PC-9 (cell line): ENCODE measurements at regions of chr11 and their contacts with region 1.

Region 1: DNA sequence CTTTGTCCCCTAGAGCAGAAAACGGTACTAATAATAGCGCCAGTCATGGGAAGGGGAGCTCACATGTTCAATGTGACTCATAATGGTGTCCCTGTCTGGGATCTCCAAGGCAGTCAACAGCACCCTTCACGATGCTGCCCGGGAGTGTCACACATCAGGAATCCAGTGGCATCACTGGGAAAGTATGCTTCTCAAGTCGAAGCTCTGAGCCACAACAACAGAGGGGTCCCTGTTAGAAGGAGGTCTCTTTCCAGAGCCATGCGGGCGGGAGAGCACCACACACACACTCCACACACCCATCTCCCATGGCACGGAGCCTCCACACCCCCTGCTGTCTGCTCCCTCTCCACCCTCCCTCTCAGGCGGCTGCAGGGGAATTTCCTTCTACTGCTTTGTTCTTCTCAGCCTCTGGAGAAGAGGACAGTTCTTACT is 119.7 kb downstream of the ETS1 start:
- DNase-seq: peak; percentile 69 to 87
- H3K4me3 ChIP-seq: no peak overlapping the region
- H3K27ac ChIP-seq: peak overlapping the region; percentile 62
- H3K4me1 ChIP-seq: peaks cover 18% of the 10 kb centered on the region
- H3K27me3 ChIP-seq: no peaks in the 10 kb centered on the region
- CTCF ChIP-seq: no peak

Region 2: GRCh38 chr11:128290106-128290840 is 177.4 kb before region 1 on chr11:
- CTCF ChIA-PET with region 1: no interaction called
- POLR2A ChIA-PET with region 1: no interaction called
- intact Hi-C with region 1: loop called (anchors 1 kb)
- DNase-seq: peak; percentile 45 to 58
- H3K4me3 ChIP-seq: no peak overlapping the region
- H3K27ac ChIP-seq: no peak overlapping the region
- H3K4me1 ChIP-seq: peaks cover 18% of the 10 kb centered on the region
- H3K27me3 ChIP-seq: no peaks in the 10 kb centered on the region
- CTCF ChIP-seq: peak; percentile 93

Region 3: DNA sequence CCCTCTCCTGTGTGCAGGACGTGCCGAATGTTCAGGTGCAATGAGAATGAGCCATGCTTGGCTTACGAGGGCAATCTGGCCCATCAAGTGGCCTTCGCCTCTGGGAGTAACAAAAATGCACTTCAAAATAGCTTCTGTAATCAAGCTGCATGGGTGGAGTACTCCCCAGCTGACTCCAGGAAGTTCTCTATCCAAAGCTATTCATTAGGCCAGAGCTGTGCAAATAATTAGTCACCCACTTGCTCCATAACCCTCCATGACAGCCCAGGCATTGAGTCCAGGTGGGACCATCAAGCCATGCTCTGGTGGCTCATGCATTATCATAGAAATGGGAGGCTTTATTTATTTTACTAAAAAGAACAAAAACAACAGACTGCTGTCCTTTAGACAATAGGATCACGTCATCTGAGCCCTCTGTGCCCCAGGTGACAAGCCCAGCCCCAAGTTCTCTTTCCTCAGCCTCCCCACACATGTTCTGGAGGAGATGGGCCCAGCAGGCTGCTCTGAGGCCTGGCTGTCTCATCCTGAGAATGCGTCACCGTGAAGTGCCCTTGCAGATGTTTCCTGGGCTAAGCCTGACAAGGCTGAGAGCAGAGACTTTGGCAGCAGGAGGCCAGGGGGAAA is 125.0 kb before region 1 on chr11:
- CTCF ChIA-PET with region 1: no interaction called
- POLR2A ChIA-PET with region 1: interaction called, 4 read pairs
- intact Hi-C with region 1: loop called (anchors 1 kb)
- DNase-seq: peak; percentile 58 to 99
- H3K4me3 ChIP-seq: no peak overlapping the region
- H3K27ac ChIP-seq: peak overlapping the region; percentile 71
- H3K4me1 ChIP-seq: peaks cover 34% of the 10 kb centered on the region
- H3K27me3 ChIP-seq: no peaks in the 10 kb centered on the region
- CTCF ChIP-seq: no peak

Region 4: DNA sequence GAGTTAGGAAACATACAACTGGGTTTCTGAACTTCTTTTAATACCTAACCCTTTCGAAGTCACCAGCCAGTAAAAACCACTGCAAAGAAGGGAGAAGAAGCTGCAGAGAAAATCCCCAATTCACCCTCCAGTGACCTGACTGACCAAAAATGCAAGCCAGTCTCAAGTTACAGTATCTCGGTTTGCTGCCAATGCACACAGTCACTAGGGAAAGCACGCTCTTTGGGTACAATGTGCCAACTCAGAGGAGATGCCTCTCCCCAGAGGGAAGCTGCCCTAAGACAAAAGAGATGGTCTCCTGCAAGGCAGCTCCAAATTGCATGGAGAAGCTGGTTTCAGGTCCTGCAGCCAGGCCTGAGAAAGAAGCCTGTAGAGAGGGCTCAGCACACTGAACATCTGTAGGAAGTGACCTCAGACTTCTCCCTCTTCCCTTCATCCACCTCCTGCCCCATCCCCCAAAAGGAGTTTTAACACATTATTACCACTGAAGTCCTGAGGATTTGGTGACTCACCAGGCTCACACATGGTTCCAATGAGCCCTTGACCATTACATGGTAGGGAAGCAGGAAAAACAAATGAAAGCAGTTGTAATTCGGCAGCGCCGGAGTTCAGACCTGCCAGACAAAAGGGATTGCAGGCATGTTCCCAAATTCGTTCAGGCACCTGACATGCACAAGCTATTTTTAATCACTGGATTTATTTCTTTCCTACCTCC is 29.6 kb after region 1 on chr11:
- CTCF ChIA-PET with region 1: no interaction called
- POLR2A ChIA-PET with region 1: no interaction called
- intact Hi-C with region 1: loop called (anchors 1 kb)
- DNase-seq: peak; percentile 80 to 97
- H3K4me3 ChIP-seq: peak overlapping the region; percentile 49; the same call in 1 of the 2 replicates
- H3K27ac ChIP-seq: peak overlapping the region; percentile 99
- H3K4me1 ChIP-seq: peaks cover 79% of the 10 kb centered on the region
- H3K27me3 ChIP-seq: no peaks in the 10 kb centered on the region
- CTCF ChIP-seq: no peak

Region 5: GRCh38 chr11:128624269-128625175 is 156.9 kb after region 1 on chr11:
- CTCF ChIA-PET with region 1: no interaction called
- POLR2A ChIA-PET with region 1: no interaction called
- intact Hi-C with region 1: loop called (anchors 1 kb)
- DNase-seq: peak; percentile 28 to 62
- H3K4me3 ChIP-seq: no peak overlapping the region
- H3K27ac ChIP-seq: peak overlapping the region; percentile 36; the same call in 1 of the 2 replicates
- H3K4me1 ChIP-seq: peaks cover 15% of the 10 kb centered on the region
- H3K27me3 ChIP-seq: no peaks in the 10 kb centered on the region
- CTCF ChIP-seq: no peak

Region 6: GRCh38 chr11:129593098-129593497 is 1125.5 kb after region 1 on chr11:
- CTCF ChIA-PET with region 1: no interaction called
- POLR2A ChIA-PET with region 1: interaction called, 10 read pairs
- intact Hi-C with region 1: no loop called
- DNase-seq: peak; percentile 69 to 91
- H3K4me3 ChIP-seq: no peak overlapping the region
- H3K27ac ChIP-seq: no peak overlapping the region
- H3K4me1 ChIP-seq: peaks cover 15% of the 10 kb centered on the region
- H3K27me3 ChIP-seq: no peaks in the 10 kb centered on the region
- CTCF ChIP-seq: no peak